GM10248 (cell line): ENCODE measurements at regions of chr6 and their contacts with region 1.

Region 1: GRCh38 chr6:43769526-43770416 is at the start of gene VEGFA:
- DNase-seq: peak; percentile 97
- CTCF ChIP-seq: peak; percentile 99

Region 2: GRCh38 chr6:43687437-43688347 is 82.1 kb before region 1 on chr6 and contains the start of gene MRPS18A:
- CTCF ChIA-PET with region 1: interaction called, 17 read pairs
- POLR2A ChIA-PET with region 1: no interaction called
- DNase-seq: peak; percentile 90
- CTCF ChIP-seq: no peak

Region 3: DNA sequence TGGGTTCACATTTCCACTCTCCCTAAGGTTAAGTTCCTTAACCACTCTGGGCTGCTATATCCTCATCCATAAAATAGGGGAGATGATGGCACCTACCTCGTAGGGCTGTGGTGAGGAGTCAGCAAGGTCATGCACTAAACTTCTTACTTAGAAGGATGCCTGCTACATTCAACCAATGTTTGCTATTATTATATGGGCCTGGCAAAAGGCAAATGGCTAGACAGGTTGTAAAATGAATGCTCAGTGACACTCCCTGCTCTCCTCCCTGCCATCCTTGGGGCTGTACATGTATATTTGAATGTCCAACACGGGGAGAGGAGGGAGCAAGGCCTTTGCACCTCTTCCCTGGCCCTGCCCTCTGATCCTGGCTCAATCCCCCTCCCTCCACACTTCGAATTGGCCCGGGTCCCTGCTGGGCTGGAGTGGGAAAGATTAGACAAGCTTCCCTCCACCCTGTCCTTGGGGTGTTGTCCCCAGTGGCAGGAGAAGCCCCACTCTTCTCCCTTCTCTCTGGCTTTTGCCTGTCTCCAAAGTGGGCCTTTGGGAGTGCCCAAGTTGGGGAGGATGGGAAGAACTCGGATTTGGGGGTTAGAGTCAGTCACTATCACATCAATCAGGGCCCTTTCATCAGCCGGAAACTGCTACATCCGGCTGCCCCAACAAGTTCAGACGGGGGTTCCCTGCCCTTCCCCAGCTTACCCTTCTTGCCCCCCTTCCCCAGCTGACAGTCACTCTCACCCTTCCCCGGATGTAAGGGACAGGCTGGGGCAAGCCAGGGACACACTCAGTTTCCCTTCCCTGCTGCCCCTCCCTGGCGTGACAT is 36.1 kb before region 1 on chr6:
- CTCF ChIA-PET with region 1: interaction called, 16 read pairs
- POLR2A ChIA-PET with region 1: no interaction called
- DNase-seq: peak; percentile 56
- CTCF ChIP-seq: no peak

Region 4: GRCh38 chr6:43758617-43759050 is 11.1 kb before region 1 on chr6:
- CTCF ChIA-PET with region 1: interaction called, 142 read pairs
- POLR2A ChIA-PET with region 1: no interaction called
- DNase-seq: peak; percentile 68
- CTCF ChIP-seq: peak; percentile 77

Region 5: DNA sequence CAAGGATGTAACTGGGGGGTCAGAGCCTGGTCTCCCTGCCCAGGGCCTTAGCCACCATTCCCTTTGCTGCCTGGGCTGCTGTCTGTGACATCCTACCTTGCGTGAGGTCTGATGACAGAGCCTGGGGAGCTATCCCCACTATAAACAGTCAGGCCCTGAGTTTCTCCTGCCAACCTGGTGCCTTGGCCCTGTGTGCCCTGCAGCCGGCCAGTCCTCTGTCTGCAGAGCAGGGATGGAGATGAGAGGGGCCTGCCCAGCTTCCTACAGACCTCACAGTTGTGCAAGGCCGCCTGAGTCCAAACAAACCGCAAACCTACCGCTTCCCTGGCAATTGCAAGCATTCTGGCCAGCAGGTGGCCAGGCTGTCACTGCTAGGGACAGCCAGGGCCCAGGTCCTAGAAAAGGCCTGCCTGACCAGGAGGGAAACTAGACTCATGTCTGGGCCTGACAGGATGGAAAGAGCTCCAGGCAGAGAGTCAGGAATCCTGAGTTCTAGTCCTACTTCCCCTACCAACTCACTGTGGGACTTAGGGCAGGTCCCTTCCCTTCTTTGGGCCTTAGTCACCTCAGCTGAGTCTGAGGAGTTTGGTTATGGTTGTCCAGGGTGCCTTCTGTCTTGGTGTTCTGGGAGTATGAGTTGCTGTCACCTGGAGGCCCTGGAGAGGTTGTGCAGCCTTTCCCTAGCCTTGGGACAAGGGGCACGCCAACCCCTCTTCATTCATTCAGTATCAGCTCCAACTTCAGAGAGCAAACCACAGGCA is 86.4 kb after region 1 on chr6:
- CTCF ChIA-PET with region 1: interaction called, 10 read pairs
- POLR2A ChIA-PET with region 1: no interaction called
- DNase-seq: no peak
- CTCF ChIP-seq: peak; percentile 17

Region 6: GRCh38 chr6:44123544-44123943 is 353.8 kb after region 1 on chr6:
- CTCF ChIA-PET with region 1: no interaction called
- POLR2A ChIA-PET with region 1: no interaction called
- DNase-seq: no peak
- CTCF ChIP-seq: no peak